A673 (cell line): ENCODE measurements at regions of chrX and their contacts with region 1.

Region 1: DNA sequence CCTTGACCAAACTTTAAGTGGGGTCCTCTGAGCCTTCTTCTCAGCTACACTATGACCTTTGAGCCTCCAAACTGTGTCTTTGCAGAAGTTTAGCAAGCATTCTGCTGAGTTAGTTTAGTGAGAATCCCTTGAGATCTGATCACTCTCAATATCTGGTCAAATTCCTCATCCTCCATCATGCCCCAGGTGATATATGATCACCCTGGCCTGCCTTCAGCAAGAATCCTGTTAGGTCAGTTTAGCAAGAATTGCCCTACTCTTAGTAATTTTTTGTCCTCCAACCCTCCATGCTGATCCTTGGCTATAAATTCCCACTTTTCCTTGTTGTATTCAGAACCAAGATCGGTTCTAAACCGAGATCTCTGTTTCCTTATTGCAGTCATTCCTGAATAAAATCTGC is 601.1 kb downstream of the ZNF674 start:
- DNase-seq: no peak
- H3K4me3 ChIP-seq: no peak overlapping the region
- H3K27ac ChIP-seq: no peak overlapping the region
- H3K4me1 ChIP-seq: no peaks in the 10 kb centered on the region
- H3K27me3 ChIP-seq: no peaks in the 10 kb centered on the region
- CTCF ChIP-seq: no peak

Region 2: GRCh38 chrX:44035576-44035975 is 1908.5 kb before region 1 on chrX:
- CTCF ChIA-PET with region 1: no interaction called
- POLR2A ChIA-PET with region 1: interaction called, 10 read pairs
- intact Hi-C with region 1: no loop called
- DNase-seq: peak; percentile 92
- H3K4me3 ChIP-seq: no peak overlapping the region
- H3K27ac ChIP-seq: no peak overlapping the region
- H3K4me1 ChIP-seq: peaks cover 69% of the 10 kb centered on the region
- H3K27me3 ChIP-seq: no peaks in the 10 kb centered on the region
- CTCF ChIP-seq: no peak

Region 3: DNA sequence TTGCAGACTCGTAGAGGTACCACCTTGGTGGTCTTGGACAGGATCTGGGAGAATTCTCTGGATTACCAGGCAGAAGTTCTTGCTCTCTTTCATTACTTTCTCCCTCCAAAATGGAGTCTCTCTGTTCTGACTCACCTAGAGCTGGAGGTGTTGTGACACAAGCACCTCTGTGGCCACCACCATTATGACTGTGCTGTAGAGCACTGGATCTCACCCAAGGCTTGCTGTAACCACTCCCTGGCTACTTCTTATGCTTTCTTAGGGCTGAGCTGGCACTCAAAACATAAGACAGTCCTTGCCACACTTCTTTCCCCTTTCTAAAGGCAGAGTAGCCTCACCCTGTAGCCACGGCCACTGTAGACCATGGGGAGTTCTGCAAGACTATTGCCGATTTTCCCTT is 446.8 kb before region 1 on chrX:
- CTCF ChIA-PET with region 1: no interaction called
- POLR2A ChIA-PET with region 1: no interaction called
- intact Hi-C with region 1: no loop called
- DNase-seq: no peak
- H3K4me3 ChIP-seq: no peak overlapping the region
- H3K27ac ChIP-seq: no peak overlapping the region
- H3K4me1 ChIP-seq: no peaks in the 10 kb centered on the region
- H3K27me3 ChIP-seq: peaks cover under 1% of the 10 kb centered on the region
- CTCF ChIP-seq: no peak

Region 4: DNA sequence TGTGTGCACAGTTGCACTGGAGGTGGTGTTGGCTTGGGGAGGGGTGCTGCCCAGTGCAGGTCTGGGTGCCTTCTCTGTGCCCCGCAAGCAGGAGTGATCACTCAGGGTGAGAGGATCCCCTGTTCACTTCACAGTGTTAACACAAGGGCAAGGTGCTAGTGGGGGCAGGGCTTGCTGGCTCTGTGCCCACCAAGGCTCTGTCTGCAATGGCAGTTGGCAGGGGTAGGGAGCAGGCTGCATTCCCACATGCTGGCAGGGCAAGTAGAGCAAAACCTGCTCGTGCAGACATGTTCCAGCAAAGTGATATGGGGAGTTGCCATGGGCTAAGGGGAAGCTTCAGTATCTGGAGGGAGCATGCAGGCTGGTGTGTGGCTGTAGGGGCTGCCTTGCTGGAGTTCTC is 173.1 kb after region 1 on chrX:
- CTCF ChIA-PET with region 1: no interaction called
- POLR2A ChIA-PET with region 1: no interaction called
- intact Hi-C with region 1: no loop called
- DNase-seq: no peak
- H3K4me3 ChIP-seq: no peak overlapping the region
- H3K27ac ChIP-seq: no peak overlapping the region
- H3K4me1 ChIP-seq: no peaks in the 10 kb centered on the region
- H3K27me3 ChIP-seq: no peaks in the 10 kb centered on the region
- CTCF ChIP-seq: no peak